ACHN (cell line): ENCODE measurements at regions of chr1 and their contacts with region 1.

Region 1: GRCh38 chr1:160006312-160006940 is 25.4 kb downstream of the PIGM start:
- DNase-seq: peak; percentile 77

Region 2: GRCh38 chr1:159936273-159936904 is 70.0 kb before region 1 on chr1:
- in situ Hi-C with region 1: loop called (anchors 10 kb)
- DNase-seq: peak; percentile 71